H1 (cell line): ENCODE measurements at regions of chr7 and their contacts with region 1.

Region 1: DNA sequence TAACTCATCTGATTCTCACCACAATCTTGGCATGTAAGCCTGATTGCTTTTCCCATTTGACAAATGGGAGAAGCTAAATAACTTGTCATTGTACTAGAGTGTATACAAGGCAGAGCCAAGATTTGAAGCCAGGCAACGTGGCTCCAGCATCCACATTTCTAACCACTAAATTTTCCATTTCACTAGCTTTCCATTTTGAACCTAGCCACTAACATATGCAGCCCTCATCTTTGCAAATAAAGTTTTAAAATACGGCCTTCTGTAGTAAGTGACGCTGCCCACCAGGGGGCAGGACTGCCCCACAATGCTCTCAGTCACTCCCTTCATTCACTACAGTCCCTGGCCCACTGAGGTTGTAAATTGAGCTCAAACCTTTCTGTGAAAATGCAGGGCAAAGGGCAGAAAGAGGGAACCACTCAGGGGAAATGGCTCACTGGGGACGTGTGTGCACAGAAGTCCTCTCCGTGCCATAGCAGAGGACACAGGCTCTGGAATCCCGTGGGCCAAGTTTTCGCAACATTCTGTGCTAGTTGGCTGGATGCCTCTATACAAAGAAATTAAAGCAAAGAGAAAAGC is 315.7 kb downstream of the TNS3 start:
- DNase-seq: peak; percentile 36 to 82
- H3K4me3 ChIP-seq: no peak overlapping the region
- H3K27ac ChIP-seq: no peak overlapping the region
- H3K4me1 ChIP-seq: no peaks in the 10 kb centered on the region
- H3K27me3 ChIP-seq: no peaks in the 10 kb centered on the region
- CTCF ChIP-seq: peak; percentile 82 to 88 (median 84)
- EP300 ChIP-seq: no peak
- POLR2A ChIP-seq: no peak
- RAD21 ChIP-seq: peak; percentile 97 to 98

Region 2: DNA sequence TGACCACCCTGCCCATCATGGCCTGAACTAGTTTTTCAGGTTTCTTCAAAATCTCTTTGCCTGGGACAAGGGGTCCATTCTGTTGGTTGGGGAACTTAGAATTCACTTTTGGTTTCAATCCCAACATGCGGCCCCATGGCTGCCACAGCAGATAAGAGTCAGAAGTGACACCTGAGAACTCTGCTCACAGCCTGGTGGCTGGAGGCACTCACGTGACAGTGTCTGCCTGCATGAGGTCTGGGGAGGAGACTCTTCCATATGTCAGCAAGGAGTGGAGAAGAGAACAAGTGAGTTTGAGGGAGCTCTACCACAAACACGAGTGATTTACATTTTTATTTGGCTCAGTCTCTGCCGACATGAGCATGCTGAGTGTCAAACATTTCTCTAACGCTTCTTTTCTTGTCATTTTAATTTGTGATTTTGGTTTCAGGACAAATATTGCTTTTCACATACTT is 54.7 kb before region 1 on chr7:
- CTCF ChIA-PET with region 1: no interaction called
- POLR2A ChIA-PET with region 1: no interaction called
- DNase-seq: no peak
- H3K4me3 ChIP-seq: no peak overlapping the region
- H3K27ac ChIP-seq: no peak overlapping the region
- H3K4me1 ChIP-seq: no peaks in the 10 kb centered on the region
- H3K27me3 ChIP-seq: no peaks in the 10 kb centered on the region
- CTCF ChIP-seq: no peak
- EP300 ChIP-seq: no peak
- POLR2A ChIP-seq: no peak
- RAD21 ChIP-seq: no peak

Region 3: GRCh38 chr7:47254081-47255006 is 11.9 kb before region 1 on chr7:
- CTCF ChIA-PET with region 1: interaction called, 29 read pairs
- POLR2A ChIA-PET with region 1: interaction called, 4 read pairs
- DNase-seq: peak; percentile 54 to 91
- H3K4me3 ChIP-seq: peak overlapping the region; percentile 38 to 70 (median 62)
- H3K27ac ChIP-seq: no peak overlapping the region
- H3K4me1 ChIP-seq: peaks cover 4 to 5% (median 4%) of the 10 kb centered on the region in 4 experiments
- H3K27me3 ChIP-seq: peaks cover 0 to 10% (median 8%) of the 10 kb centered on the region in 4 experiments; a peak in 5 of 7 replicates
- CTCF ChIP-seq: peak; percentile 82 to 92 (median 85)
- EP300 ChIP-seq: no peak
- POLR2A ChIP-seq: no peak
- RAD21 ChIP-seq: peak; percentile 46 to 80

Region 4: DNA sequence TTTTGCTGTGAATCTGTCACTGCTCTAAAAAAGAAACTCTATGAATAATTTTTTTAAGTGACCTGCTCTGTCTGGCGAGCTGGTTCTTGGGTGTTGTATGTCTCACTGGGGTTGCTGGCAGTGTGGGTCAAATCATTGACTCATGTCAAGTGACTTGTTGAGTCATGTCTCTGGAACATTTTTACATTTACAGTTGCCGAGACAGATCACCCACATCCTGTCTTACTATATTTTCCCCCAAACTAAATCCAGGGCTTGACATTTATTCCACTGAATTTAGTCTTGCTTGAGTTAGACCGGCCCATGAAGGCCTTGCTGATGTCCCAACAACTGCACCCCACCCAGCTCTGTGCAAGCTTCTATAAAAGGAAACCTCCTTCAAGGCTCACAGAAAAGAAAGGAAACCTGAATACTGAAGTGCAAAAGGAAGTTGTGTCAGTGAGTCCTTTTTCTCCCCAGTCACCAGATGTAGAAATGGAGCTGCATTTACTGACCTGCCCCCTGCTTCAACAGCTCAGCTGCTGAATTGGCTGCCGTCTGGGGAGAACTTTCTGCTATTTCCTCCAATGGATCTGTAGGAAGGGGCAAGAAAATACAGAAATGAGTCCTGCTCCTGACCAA is 25.4 kb after region 1 on chr7:
- CTCF ChIA-PET with region 1: interaction called, 14 read pairs
- POLR2A ChIA-PET with region 1: interaction called, 3 read pairs
- DNase-seq: no peak
- H3K4me3 ChIP-seq: no peak overlapping the region
- H3K27ac ChIP-seq: no peak overlapping the region
- H3K4me1 ChIP-seq: no peaks in the 10 kb centered on the region
- H3K27me3 ChIP-seq: no peaks in the 10 kb centered on the region
- CTCF ChIP-seq: no peak
- EP300 ChIP-seq: no peak
- POLR2A ChIP-seq: no peak
- RAD21 ChIP-seq: no peak

Region 5: GRCh38 chr7:47342296-47343060 is 76.3 kb after region 1 on chr7:
- CTCF ChIA-PET with region 1: interaction called, 18 read pairs
- POLR2A ChIA-PET with region 1: no interaction called
- DNase-seq: no peak
- H3K4me3 ChIP-seq: no peak overlapping the region
- H3K27ac ChIP-seq: no peak overlapping the region
- H3K4me1 ChIP-seq: no peaks in the 10 kb centered on the region
- H3K27me3 ChIP-seq: no peaks in the 10 kb centered on the region
- CTCF ChIP-seq: no peak
- EP300 ChIP-seq: no peak
- POLR2A ChIP-seq: no peak
- RAD21 ChIP-seq: no peak

Region 6: GRCh38 chr7:47386273-47386835 is 120.1 kb after region 1 on chr7:
- CTCF ChIA-PET with region 1: interaction called, 11 read pairs
- POLR2A ChIA-PET with region 1: no interaction called
- DNase-seq: no peak
- H3K4me3 ChIP-seq: no peak overlapping the region
- H3K27ac ChIP-seq: no peak overlapping the region
- H3K4me1 ChIP-seq: peaks cover 1 to 5% (median 2%) of the 10 kb centered on the region in 4 experiments; a peak in 4 of 7 replicates
- H3K27me3 ChIP-seq: no peaks in the 10 kb centered on the region
- CTCF ChIP-seq: no peak
- EP300 ChIP-seq: no peak
- POLR2A ChIP-seq: no peak
- RAD21 ChIP-seq: no peak

Region 7: DNA sequence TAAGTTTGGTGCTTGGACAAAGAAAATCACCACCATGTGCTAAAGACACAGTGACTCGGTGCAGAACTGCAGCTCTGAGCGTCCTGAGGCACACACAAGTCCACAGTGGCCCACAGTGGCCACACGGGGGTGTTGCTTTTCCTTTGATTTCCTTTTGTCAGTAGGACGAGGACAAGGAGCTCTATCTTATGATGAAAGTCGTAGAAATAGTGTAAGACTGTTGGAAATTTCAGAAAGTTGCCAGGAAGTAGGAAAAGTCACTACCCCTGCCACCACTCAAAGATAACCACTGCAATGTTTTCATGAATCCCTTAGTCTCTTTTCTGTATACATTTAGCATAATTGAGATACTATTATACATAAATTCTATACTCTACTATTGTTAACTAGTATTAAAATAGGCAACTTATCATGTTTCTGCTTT is 169.7 kb after region 1 on chr7:
- CTCF ChIA-PET with region 1: interaction called, 19 read pairs
- POLR2A ChIA-PET with region 1: no interaction called
- DNase-seq: peak in 1 of 2 experiments; percentile 23
- H3K4me3 ChIP-seq: no peak overlapping the region
- H3K27ac ChIP-seq: no peak overlapping the region
- H3K4me1 ChIP-seq: no peaks in the 10 kb centered on the region
- H3K27me3 ChIP-seq: no peaks in the 10 kb centered on the region
- CTCF ChIP-seq: peak; percentile 66 to 72 (median 69)
- EP300 ChIP-seq: no peak
- POLR2A ChIP-seq: no peak
- RAD21 ChIP-seq: peak; percentile 80 to 81

Region 8: GRCh38 chr7:47937065-47937683 is 671.0 kb after region 1 on chr7:
- CTCF ChIA-PET with region 1: interaction called, 11 read pairs
- POLR2A ChIA-PET with region 1: no interaction called
- DNase-seq: no peak
- H3K4me3 ChIP-seq: no peak overlapping the region
- H3K27ac ChIP-seq: no peak overlapping the region
- H3K4me1 ChIP-seq: peaks cover 0 to 9% (median 5%) of the 10 kb centered on the region in 4 experiments; a peak in 6 of 7 replicates
- H3K27me3 ChIP-seq: no peaks in the 10 kb centered on the region
- CTCF ChIP-seq: no peak
- EP300 ChIP-seq: no peak
- POLR2A ChIP-seq: no peak
- RAD21 ChIP-seq: no peak